Activated T-helper 1 cell treated with anti-CD3 and anti-CD28 coated beads, Interleukin-12 subunit alpha, Interleukin-12 subunit beta, Interleukin-2, Interleukin-4 antibody, amounts not matched to agents 30 ng/mL and 10 ng/mL and 1 ng/mL, durations not matched to agents 14 hours and 24 hours and 36 hours (primary cell): ENCODE measurements at regions of chr4 and their contacts with region 1.

Region 1: GRCh38 chr4:77618383-77619122 is 12.9 kb downstream of the CXCL13 start:
- DNase-seq: peak; percentile 45
- H3K4me3 Mint-ChIP-seq: no peak overlapping the region
- H3K27ac Mint-ChIP-seq: peak overlapping the region; percentile 19
- H3K4me1 Mint-ChIP-seq: peaks cover 7% of the 10 kb centered on the region
- H3K27me3 Mint-ChIP-seq: peaks cover 24% of the 10 kb centered on the region

Region 2: DNA sequence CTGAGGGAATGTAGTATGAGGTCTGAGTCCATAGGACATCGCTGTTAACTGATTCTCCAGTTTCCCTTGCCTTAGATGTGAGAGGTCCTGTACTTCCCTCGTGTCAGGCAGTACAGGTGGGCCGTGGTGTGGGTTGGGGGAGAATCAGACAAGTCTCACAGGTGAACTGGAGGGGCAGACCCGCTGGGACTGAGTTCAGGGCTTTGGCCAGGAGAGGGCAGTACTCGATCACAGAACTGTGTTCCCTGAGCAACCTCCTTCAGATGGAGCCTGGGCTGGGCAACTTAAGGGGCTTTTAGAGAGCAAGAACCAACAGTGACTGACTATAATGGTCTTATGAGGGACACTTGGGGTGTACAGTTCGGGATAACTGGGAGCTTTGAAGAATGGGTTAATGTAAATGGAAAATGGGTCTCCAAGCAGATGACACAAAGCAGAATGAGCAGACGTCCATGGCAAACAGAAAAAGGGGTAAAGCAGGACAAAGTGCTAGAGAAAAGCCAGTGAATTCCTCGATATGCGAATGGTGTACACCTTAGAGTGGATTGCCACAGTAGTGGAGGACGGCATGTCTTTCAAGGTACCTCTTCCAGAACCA is 378.0 kb before region 1 on chr4:
- intact Hi-C with region 1: loop called (anchors 2 kb)
- DNase-seq: peak; percentile 12
- H3K4me3 Mint-ChIP-seq: no peak overlapping the region
- H3K27ac Mint-ChIP-seq: no peak overlapping the region
- H3K4me1 Mint-ChIP-seq: no peaks in the 10 kb centered on the region
- H3K27me3 Mint-ChIP-seq: peaks cover 10% of the 10 kb centered on the region

Region 3: DNA sequence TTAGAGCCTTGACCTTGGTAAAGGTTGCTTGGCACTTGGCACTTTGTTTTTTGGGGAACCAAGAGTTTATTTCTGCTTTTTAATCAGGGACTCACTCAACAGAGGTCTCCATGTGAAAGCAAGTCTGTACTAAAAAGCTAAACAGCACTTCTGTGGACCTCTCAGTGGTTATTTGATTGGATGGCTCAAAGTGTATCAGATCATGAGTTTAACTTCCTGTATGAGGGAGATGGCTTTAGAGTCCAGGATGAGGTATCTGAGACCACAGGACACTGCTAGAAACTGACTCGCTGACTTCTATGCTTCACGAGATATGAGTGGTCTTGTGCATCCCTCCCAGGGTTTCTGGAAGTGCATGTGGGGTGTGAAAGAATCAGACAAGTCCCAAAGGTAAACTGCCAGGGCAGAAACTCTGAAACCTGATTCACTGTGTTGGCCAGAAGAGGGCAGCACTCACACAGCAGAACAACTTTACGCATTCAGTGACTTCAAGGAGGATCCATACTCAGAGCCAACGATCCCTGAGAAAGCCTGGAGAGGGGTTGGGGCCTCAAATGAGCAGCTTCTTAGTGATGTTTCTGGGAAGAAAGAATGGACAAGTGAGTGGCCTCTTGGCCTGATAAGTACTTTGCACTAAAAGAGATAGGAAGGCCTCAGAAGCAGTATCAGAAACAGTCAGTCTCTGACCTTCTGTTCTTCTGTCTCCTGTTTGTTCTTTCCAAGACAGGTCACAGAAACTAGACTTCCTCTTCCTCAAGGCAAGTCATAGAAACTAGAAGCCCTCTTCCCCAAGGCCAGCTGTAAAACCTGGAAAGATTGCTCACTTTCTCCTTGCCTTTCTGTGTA is 233.2 kb before region 1 on chr4:
- intact Hi-C with region 1: loop called (anchors 1 kb)
- DNase-seq: peak; percentile 32
- H3K4me3 Mint-ChIP-seq: no peak overlapping the region
- H3K27ac Mint-ChIP-seq: no peak overlapping the region
- H3K4me1 Mint-ChIP-seq: peaks cover 6% of the 10 kb centered on the region
- H3K27me3 Mint-ChIP-seq: peaks cover 8% of the 10 kb centered on the region

Region 4: DNA sequence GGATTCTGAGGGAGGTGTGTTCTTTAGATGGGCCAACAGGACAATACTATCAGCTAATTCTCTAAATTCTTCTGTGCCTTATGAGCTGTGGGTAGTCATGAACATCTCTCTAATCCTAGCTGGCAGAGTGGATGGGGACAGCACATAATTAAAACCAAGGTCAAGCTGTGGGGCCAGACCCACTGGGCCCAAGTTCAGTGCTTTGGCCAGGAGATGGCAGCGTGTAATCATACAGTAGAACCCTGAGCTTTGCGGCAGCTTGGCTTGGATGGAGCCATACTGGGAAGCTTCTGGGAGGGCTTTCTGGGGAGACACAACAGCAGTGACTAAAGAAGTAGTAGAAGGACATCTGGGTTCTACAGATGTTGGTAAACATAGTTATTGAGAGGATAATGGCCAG is 153.3 kb before region 1 on chr4:
- intact Hi-C with region 1: loop called (anchors 1 kb)
- DNase-seq: no peak
- H3K4me3 Mint-ChIP-seq: no peak overlapping the region
- H3K27ac Mint-ChIP-seq: peak overlapping the region; percentile 5
- H3K4me1 Mint-ChIP-seq: peaks cover 7% of the 10 kb centered on the region
- H3K27me3 Mint-ChIP-seq: peaks cover 12% of the 10 kb centered on the region

Region 5: DNA sequence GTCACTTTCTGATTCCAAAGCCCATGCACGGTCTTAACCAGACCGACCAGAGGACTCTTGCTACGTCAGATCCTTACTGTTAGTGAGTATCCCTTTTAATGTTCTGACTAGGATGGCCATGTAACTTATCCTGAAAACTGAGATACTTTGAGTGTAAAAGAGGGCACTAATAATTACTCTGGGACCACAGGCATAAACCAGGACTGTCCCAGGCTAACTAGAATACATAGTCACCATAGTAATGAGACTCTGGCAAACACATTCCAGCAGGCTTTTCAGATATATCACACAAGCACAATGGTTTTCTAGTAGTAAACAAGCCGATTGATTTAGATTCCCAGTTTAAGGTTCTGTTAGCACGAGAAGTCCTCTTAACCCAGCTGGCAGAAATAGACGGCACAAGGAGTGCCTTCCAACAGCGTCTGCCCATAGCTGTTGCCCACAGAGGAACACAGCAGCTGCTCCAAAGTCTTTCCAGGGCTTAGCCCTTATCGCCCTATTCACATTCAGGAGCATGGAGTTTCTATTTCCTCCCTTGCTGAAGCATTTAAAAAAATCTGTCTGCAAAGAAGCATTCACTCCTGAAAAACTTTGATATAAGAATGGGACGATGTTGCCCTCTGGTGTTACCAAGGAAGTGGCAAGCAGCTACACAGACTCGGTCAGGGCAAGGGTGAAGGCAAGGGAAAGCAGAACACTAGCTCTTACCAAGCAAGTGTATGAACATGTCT is 79.5 kb after region 1 on chr4:
- intact Hi-C with region 1: loop called (anchors 2 kb)
- DNase-seq: no peak
- H3K4me3 Mint-ChIP-seq: no peak overlapping the region
- H3K27ac Mint-ChIP-seq: no peak overlapping the region
- H3K4me1 Mint-ChIP-seq: no peaks in the 10 kb centered on the region
- H3K27me3 Mint-ChIP-seq: peaks cover 7% of the 10 kb centered on the region